Activated CD8-positive, alpha-beta T cell treated with anti-CD3 and anti-CD28 coated beads, Interleukin-2, amount 10 ng/mL, durations not matched to agents 7 days and 5 days (primary cell): ENCODE measurements at regions of chr17 and their contacts with region 1.

Region 1: DNA sequence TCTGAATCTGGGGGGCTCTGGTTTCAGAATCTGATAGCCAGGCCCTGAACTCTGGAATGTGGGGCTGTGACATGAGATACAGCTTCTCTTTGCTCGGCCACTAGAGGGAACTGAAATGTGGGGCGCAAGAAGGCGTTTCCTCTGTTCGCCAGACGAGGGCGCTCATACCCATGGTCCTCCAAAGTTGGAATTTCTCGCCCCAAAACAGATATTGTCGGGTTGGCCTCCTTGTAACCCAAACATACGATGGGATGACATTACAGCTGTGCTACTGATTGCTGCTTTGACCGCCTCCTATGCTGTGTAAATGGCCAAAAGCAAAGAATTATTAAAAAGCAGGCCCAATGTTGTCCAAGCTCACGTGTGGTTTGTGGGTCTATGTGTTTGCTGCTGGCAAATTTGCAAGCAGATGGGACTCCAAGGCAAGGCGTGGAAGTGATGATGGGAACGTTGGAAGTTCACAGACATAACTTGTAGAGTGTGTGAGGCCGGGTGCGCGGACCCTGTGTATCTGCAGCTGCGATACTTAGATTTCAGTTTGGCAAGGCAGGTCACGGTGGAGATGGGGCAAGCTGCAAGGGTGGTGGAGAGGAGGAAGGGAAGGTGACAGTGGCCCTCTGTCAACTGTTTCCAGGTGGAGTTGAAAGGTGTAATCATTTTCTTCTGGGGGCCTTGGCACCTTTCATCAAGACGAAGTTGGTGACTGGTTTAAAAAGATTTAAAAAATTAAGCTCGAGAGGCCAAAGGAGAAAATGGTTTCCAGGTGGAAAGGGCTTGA is 13.0 kb upstream of the MSI2 start:
- DNase-seq: peak; percentile 85
- ATAC-seq: peak; percentile 80
- H3K4me3 Mint-ChIP-seq: no peak overlapping the region
- H3K27ac Mint-ChIP-seq: no peak overlapping the region
- H3K4me1 Mint-ChIP-seq: peaks cover 9% of the 10 kb centered on the region
- H3K27me3 Mint-ChIP-seq: peaks cover 17% of the 10 kb centered on the region

Region 2: GRCh38 chr17:57261084-57261461 is 17.7 kb after region 1 on chr17:
- CTCF ChIA-PET with region 1: interaction called, 53 read pairs
- POLR2A ChIA-PET with region 1: interaction called, 3 read pairs
- DNase-seq: no peak
- ATAC-seq: no peak
- H3K4me3 Mint-ChIP-seq: no peak overlapping the region
- H3K27ac Mint-ChIP-seq: no peak overlapping the region
- H3K4me1 Mint-ChIP-seq: peaks cover 58% of the 10 kb centered on the region
- H3K27me3 Mint-ChIP-seq: no peaks in the 10 kb centered on the region

Region 3: GRCh38 chr17:57357399-57357807 is 114.0 kb after region 1 on chr17:
- CTCF ChIA-PET with region 1: interaction called, 23 read pairs
- POLR2A ChIA-PET with region 1: no interaction called
- DNase-seq: no peak
- ATAC-seq: no peak
- H3K4me3 Mint-ChIP-seq: peak overlapping the region; percentile 39
- H3K27ac Mint-ChIP-seq: peak overlapping the region; percentile 59
- H3K4me1 Mint-ChIP-seq: peaks cover 62% of the 10 kb centered on the region
- H3K27me3 Mint-ChIP-seq: no peaks in the 10 kb centered on the region

Region 4: GRCh38 chr17:57455063-57455914 is 211.9 kb after region 1 on chr17:
- CTCF ChIA-PET with region 1: interaction called, 13 read pairs
- POLR2A ChIA-PET with region 1: interaction called, 4 read pairs
- DNase-seq: peak; percentile 86
- ATAC-seq: peak; percentile 85
- H3K4me3 Mint-ChIP-seq: peak overlapping the region; percentile 57
- H3K27ac Mint-ChIP-seq: peak overlapping the region; percentile 87
- H3K4me1 Mint-ChIP-seq: peaks cover 79% of the 10 kb centered on the region
- H3K27me3 Mint-ChIP-seq: no peaks in the 10 kb centered on the region

Region 5: DNA sequence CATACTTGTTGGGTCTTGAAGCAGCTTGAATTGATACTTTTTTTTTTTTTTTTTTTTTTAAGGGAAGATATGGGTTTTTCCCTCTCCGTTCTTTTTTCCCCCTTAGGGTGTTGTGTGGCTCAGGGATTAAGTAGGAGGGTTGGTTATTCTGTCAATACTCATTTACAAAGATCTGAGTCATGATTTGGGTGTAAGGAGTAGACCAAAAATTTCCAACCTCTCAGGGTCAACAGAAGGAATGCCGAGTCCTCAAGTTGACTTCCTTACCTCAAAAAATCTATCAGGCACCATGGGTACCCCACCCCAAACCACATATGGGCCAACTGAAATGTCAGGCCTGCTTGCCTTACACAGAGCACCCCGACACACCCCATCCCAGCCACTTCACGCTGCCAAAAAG is 271.3 kb after region 1 on chr17:
- CTCF ChIA-PET with region 1: interaction called, 11 read pairs
- POLR2A ChIA-PET with region 1: interaction called, 3 read pairs
- DNase-seq: no peak
- ATAC-seq: no peak
- H3K4me3 Mint-ChIP-seq: no peak overlapping the region
- H3K27ac Mint-ChIP-seq: no peak overlapping the region
- H3K4me1 Mint-ChIP-seq: peaks cover 7% of the 10 kb centered on the region
- H3K27me3 Mint-ChIP-seq: no peaks in the 10 kb centered on the region

Region 6: DNA sequence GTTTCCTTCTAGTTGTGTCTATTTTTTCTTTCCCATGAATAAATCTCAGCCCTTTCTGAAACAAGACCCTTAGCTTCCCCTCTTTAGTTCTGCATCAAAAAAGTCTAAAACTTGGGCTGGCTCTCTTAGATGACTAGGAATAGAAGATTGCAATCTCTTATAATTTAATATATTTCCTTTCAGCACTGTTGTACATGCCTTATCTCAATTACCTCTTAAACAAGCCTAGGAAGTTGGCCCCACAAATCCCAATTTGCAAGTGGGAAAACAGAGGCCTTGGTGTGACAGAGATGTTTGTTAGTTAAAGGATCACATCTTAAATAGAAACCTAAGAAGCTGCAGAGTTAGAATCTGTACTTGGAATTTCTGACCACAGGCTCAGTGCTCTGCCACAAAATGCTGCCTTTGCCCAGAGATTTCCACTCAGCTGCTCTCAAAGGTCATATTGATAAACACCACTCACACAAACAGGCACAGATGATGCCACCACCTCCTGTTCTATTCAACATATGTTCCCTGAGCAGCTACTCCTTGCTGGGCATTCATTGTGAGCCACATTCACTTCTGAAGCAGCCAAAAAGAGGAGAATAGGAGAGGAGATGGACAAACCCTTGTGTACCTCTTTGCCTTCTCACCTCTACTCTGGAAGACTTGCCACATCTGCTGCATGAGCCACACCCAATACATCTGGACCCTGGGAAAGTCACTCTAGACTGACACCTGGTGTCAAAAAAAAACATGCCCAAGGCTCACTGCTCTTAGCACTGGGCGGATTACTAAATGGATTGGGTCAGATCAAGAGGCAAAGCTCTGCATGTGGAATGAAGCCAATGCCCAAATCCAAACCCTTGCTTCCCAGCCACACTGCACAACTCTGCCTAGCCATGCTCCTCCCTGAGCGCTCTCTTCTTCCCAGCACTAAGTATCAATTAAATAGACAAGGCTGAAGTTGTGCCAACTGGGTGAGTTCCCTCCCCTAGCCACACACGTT is 496.3 kb after region 1 on chr17:
- CTCF ChIA-PET with region 1: interaction called, 35 read pairs
- POLR2A ChIA-PET with region 1: no interaction called
- DNase-seq: peak; percentile 50
- ATAC-seq: peak; percentile 75
- H3K4me3 Mint-ChIP-seq: no peak overlapping the region
- H3K27ac Mint-ChIP-seq: peak overlapping the region; percentile 4
- H3K4me1 Mint-ChIP-seq: peaks cover 19% of the 10 kb centered on the region
- H3K27me3 Mint-ChIP-seq: peaks cover 7% of the 10 kb centered on the region